Activated naive CD4-positive, alpha-beta T cell treated with anti-CD3 and anti-CD28 coated beads for 36 hours (primary cell): ENCODE measurements at regions of chr17 and their contacts with region 1.

Region 1: GRCh38 chr17:78745407-78746088 is 36.5 kb downstream of the CYTH1 start:
- DNase-seq: peak; percentile 72
- H3K4me3 Mint-ChIP-seq: peak overlapping the region; percentile 8
- H3K27ac Mint-ChIP-seq: peak overlapping the region; percentile 95
- H3K4me1 Mint-ChIP-seq: peaks cover 91% of the 10 kb centered on the region
- H3K27me3 Mint-ChIP-seq: no peaks in the 10 kb centered on the region

Region 2: GRCh38 chr17:78589885-78590284 is 155.7 kb before region 1 on chr17:
- CTCF ChIA-PET with region 1: no interaction called
- intact Hi-C with region 1: loop called (anchors 5 kb)
- DNase-seq: no peak
- H3K4me3 Mint-ChIP-seq: no peak overlapping the region
- H3K27ac Mint-ChIP-seq: no peak overlapping the region
- H3K4me1 Mint-ChIP-seq: peaks cover 9% of the 10 kb centered on the region
- H3K27me3 Mint-ChIP-seq: no peaks in the 10 kb centered on the region

Region 3: GRCh38 chr17:78677303-78678221 is 68.0 kb before region 1 on chr17:
- CTCF ChIA-PET with region 1: no interaction called
- intact Hi-C with region 1: no loop called
- DNase-seq: no peak
- H3K4me3 Mint-ChIP-seq: no peak overlapping the region
- H3K27ac Mint-ChIP-seq: peak overlapping the region; percentile 56
- H3K4me1 Mint-ChIP-seq: no peaks in the 10 kb centered on the region
- H3K27me3 Mint-ChIP-seq: no peaks in the 10 kb centered on the region

Region 4: GRCh38 chr17:78708510-78708973 is 37.0 kb before region 1 on chr17:
- CTCF ChIA-PET with region 1: interaction called, 11 read pairs
- intact Hi-C with region 1: loop called (anchors 2 kb)
- DNase-seq: peak; percentile 77
- H3K4me3 Mint-ChIP-seq: peak overlapping the region; percentile 22
- H3K27ac Mint-ChIP-seq: peak overlapping the region; percentile 42
- H3K4me1 Mint-ChIP-seq: peaks cover 64% of the 10 kb centered on the region
- H3K27me3 Mint-ChIP-seq: no peaks in the 10 kb centered on the region

Region 5: GRCh38 chr17:78723001-78723796 is 22.3 kb before region 1 on chr17:
- CTCF ChIA-PET with region 1: interaction called, 14 read pairs
- intact Hi-C with region 1: loop called (anchors 1 kb)
- DNase-seq: no peak
- H3K4me3 Mint-ChIP-seq: no peak overlapping the region
- H3K27ac Mint-ChIP-seq: peak overlapping the region; percentile 92
- H3K4me1 Mint-ChIP-seq: peaks cover 97% of the 10 kb centered on the region
- H3K27me3 Mint-ChIP-seq: no peaks in the 10 kb centered on the region

Region 6: GRCh38 chr17:78774956-78775571 is 29.5 kb after region 1 on chr17:
- CTCF ChIA-PET with region 1: interaction called, 5 read pairs
- intact Hi-C with region 1: loop called (anchors 1 kb)
- DNase-seq: peak; percentile 86
- H3K4me3 Mint-ChIP-seq: peak overlapping the region; percentile 82
- H3K27ac Mint-ChIP-seq: peak overlapping the region; percentile 97
- H3K4me1 Mint-ChIP-seq: peaks cover 65% of the 10 kb centered on the region
- H3K27me3 Mint-ChIP-seq: no peaks in the 10 kb centered on the region